Colonic mucosa (tissue), 4 donors: ENCODE measurements at regions of chr18 and their contacts with region 1.

Region 1: GRCh38 chr18:47100214-47100831 is 50.0 kb downstream of the HDHD2 start:
- DNase-seq: peak; percentile 57
- H3K4me3 ChIP-seq: no peak overlapping the region
- H3K27ac ChIP-seq: no peak overlapping the region
- H3K4me1 ChIP-seq: no peaks in the 10 kb centered on the region
- H3K27me3 ChIP-seq: no peaks in the 10 kb centered on the region
- CTCF ChIP-seq: peak; percentile 60

Region 2: GRCh38 chr18:46946656-46947282 is 153.6 kb before region 1 on chr18:
- intact Hi-C with region 1: no loop called
- DNase-seq: peak; percentile 83
- H3K4me3 ChIP-seq: peak overlapping the region; percentile 50
- H3K27ac ChIP-seq: no peak overlapping the region
- H3K4me1 ChIP-seq: no peaks in the 10 kb centered on the region
- H3K27me3 ChIP-seq: no peaks in the 10 kb centered on the region
- CTCF ChIP-seq: no peak

Region 3: DNA sequence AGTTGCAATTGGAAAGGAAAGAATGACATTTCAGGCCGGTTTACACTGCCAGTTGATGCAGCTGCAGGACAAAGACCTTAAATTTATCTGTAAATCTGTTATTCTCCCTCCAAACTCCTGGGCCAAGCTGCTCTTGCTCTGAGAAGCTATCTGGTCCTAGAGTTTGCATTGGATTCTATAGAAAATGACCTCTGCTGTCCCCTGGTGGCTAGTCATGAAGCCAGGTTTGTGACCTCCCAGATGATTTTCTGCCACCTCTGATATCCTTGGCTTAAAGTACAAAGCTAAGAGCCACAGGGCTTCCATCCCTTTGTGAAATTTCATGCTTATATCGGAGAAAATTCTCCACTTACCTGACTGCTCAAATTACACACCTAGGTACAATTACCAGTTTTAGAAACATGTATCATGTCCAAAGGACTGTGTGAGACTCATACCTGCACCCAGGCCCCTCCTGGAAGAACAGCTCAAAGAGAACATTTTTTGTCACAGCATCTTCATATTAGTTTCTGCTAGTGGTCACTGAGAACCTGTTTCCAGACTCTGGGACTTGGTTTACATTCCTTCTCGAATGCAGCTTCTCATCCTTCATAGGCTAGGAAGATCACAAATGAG is 104.7 kb after region 1 on chr18:
- intact Hi-C with region 1: loop called (anchors 5 kb)
- DNase-seq: peak; percentile 34
- H3K4me3 ChIP-seq: no peak overlapping the region
- H3K27ac ChIP-seq: no peak overlapping the region
- H3K4me1 ChIP-seq: no peaks in the 10 kb centered on the region
- H3K27me3 ChIP-seq: no peaks in the 10 kb centered on the region
- CTCF ChIP-seq: peak; percentile 69

Region 4: DNA sequence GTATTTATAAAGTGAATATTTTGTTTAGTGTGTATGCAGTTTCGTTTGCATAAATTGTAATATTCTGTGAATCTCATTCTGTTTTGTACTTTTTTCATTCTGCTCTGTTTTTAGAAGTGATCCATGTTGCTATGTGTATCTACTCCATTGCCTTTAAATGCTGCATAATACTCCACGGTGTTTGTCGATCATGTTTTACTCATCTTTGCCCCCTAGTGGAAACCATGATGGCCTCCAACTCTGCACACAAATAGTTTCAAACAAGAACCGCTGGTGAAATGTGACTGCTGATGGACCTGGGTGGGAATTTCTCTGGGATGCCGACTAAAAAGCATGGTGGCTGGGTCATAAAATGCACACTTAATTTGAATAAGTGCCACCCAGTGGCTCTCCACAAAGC is 183.2 kb after region 1 on chr18:
- intact Hi-C with region 1: loop called (anchors 10 kb)
- DNase-seq: no peak
- H3K4me3 ChIP-seq: no peak overlapping the region
- H3K27ac ChIP-seq: no peak overlapping the region
- H3K4me1 ChIP-seq: no peaks in the 10 kb centered on the region
- H3K27me3 ChIP-seq: no peaks in the 10 kb centered on the region
- CTCF ChIP-seq: no peak

Region 5: DNA sequence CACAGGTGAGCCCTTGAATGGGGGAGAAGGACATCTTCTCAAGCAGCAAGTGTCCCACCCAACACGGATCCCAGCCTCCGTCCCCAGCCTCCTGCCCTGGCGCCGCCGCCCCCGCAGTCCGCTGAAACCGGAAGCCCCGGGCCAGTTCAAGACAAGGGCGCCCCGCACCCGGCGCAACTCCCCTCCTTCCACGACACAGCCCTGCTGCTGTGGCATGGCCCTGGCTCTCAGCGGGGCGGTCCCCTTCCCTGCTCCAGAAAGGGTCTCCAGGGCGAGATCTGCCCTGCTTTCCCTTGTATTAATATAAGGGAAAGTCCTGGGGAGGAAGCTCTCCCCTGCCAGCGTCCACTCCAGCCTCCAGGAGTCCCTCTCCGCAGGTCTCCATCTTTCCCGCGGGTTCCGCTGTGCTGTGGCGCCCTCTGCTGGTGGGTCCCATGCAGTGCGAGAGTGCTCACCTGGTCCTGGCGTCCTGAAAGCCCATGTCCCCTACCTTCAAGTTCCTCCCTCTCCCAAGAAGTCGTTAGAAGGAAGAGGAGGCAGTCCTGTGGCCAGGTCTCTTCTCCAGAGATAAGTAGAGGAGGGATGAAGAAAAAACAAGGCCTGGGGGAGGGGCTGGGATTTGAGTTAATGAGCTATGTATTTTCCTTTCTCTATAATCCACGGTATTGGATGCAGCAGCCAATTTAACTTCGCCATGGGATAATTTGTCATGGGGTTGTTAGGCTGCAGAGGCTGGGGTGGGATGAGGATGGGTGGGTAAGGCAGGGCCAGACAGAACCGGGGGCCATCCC is 654.2 kb after region 1 on chr18:
- intact Hi-C with region 1: loop called (anchors 5 kb)
- DNase-seq: peak; percentile 67
- H3K4me3 ChIP-seq: no peak overlapping the region
- H3K27ac ChIP-seq: no peak overlapping the region
- H3K4me1 ChIP-seq: no peaks in the 10 kb centered on the region
- H3K27me3 ChIP-seq: no peaks in the 10 kb centered on the region
- CTCF ChIP-seq: peak; percentile 76